Endothelial cell of umbilical vein (primary cell): ENCODE measurements at regions of chr2 and their contacts with region 1.

Region 1: DNA sequence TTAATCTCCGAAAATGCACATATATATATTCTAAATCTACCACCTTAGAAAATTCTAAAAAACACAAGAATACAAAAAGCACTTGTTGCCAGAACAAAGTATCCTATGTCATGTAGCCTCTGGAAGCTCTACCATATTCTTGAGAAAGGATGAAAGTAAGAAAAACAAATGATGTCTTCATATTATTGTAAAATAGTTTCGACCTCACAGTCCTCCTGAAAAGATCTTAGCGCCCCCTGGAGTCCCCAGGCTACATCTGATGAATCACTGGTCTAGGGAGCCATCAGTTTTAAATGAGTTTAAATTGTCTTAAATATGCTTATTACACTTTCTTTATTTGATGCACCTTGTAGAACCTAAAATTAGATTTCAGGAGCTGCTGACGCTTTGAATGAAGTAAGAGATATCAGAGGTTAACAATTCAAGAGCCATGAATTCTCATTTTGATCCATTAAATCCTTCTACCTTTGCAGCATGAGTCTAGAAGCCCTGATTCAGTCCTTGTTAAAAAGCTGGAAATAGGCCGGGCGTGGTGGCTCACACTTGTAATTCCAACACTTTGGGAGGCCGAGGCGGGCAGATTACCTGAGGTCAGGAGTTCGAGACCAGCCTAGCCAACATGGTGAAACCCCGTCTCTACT is 138.8 kb downstream of the MCFD2 start:
- DNase-seq: peak; percentile 71
- H3K4me3 ChIP-seq: no peak overlapping the region
- H3K27ac ChIP-seq: no peak overlapping the region
- H3K4me1 ChIP-seq: no peaks in the 10 kb centered on the region
- H3K27me3 ChIP-seq: no peaks in the 10 kb centered on the region
- CTCF ChIP-seq: peak; percentile 72 to 75
- POLR2A ChIP-seq: no peak

Region 2: DNA sequence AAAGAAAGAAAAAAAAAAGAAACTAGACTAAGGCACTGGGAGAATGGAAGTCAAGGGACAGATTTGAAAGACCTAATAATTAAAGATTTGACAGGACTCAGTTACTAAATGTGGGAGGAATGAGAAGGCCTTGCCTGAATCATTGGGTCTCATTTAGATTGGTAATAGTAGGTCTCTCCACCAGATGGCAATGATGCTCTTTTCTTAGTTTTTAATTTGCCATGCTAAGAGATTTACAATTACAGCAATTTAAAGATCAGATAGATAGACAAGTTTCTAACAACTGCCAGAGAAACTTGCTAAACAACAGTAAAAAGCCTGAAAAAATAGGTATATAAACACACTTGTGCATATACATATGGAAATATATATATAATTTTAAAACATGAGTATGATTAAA is 144.5 kb before region 1 on chr2:
- CTCF ChIA-PET with region 1: interaction called, 5 read pairs
- POLR2A ChIA-PET with region 1: no interaction called
- dilution Hi-C with region 1: no loop called
- intact Hi-C with region 1: loop called (anchors 1 kb)
- DNase-seq: peak; percentile 79
- H3K4me3 ChIP-seq: no peak overlapping the region
- H3K27ac ChIP-seq: no peak overlapping the region
- H3K4me1 ChIP-seq: no peaks in the 10 kb centered on the region
- H3K27me3 ChIP-seq: no peaks in the 10 kb centered on the region
- CTCF ChIP-seq: peak; percentile 21 to 41
- POLR2A ChIP-seq: no peak

Region 3: DNA sequence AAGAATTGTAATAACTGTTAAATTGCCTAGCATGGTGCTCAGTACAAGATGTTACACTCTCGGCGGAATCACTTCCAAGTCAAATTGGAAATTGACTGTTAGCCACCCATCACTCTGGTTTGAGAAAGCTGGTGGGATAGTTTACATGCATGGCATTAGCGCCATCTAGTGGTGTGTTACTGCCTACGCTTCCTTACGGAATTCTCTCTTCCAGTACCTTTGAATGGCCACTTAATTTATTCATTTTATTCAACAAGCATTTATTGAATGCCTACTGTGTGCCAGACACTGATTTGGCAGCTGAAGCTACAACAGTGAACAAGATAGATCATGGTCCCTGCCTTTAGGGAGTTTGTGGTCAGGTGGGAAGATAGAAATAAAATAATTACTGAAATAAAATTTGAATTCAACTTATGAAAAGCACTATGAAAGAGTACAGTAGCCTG is 126.2 kb before region 1 on chr2:
- CTCF ChIA-PET with region 1: interaction called, 31 read pairs
- POLR2A ChIA-PET with region 1: no interaction called
- dilution Hi-C with region 1: no loop called
- intact Hi-C with region 1: no loop called
- DNase-seq: peak; percentile 80
- H3K4me3 ChIP-seq: no peak overlapping the region
- H3K27ac ChIP-seq: no peak overlapping the region
- H3K4me1 ChIP-seq: peaks cover 4% of the 10 kb centered on the region
- H3K27me3 ChIP-seq: no peaks in the 10 kb centered on the region
- CTCF ChIP-seq: peak; percentile 81 to 83
- POLR2A ChIP-seq: no peak

Region 4: DNA sequence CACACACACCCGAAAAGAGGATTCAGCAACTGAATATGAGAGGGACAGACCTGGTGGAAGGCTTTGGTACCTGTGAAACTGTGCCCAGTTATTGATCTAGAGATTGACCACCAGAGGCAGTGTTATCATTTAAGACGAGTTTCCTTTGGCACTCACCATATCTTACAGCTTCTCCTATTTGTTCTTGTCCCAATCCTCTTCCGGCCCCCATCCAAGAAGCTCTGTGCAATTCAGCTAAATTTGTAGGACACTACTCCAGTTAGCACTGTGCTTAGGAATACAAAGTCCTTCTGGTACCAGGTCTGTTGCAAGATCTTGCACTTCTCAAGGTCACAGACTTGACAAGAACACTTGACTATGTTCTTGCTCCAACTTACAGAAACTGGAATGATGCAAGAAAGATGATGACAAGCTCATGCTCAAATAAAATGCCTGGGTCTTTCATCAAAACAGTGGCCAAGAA is 119.7 kb before region 1 on chr2:
- CTCF ChIA-PET with region 1: interaction called, 31 read pairs
- POLR2A ChIA-PET with region 1: no interaction called
- dilution Hi-C with region 1: no loop called
- intact Hi-C with region 1: loop called (anchors 1 kb)
- DNase-seq: peak; percentile 28
- H3K4me3 ChIP-seq: no peak overlapping the region
- H3K27ac ChIP-seq: no peak overlapping the region
- H3K4me1 ChIP-seq: peaks cover 16% of the 10 kb centered on the region
- H3K27me3 ChIP-seq: no peaks in the 10 kb centered on the region
- CTCF ChIP-seq: peak; percentile 25 to 30
- POLR2A ChIP-seq: no peak